CD8-positive, alpha-beta T cell (primary cell): ENCODE measurements at regions of chr15 and their contacts with region 1.

Region 1: DNA sequence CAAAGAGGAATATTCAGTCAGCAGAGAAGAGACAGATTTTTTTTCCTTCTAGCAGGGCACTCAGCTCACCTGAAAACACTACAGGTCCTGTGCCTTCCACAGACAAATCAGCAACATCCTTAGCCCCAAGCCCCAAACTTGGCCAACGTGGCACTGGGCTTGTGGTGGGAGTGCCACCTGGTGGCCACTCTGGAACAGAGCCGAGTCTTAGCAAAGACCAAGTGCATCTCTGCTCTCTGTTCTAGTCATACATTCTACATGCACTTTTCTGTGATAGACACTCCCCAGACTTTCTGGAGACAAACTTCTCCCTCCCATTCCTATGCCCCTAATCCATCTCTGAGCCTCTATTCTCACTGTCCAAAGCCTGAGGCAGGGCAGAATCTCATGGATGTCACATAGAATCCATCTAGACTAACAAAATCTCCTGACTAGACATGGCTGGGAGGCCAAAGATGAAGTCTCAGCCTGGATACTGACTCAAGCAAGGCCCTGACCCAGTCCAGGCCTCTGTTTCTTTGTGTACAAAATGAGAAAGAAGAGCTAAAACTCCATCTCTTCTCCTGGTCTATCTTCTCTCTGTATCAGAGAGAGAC is 5.1 kb upstream of the SEMA7A start:
- DNase-seq: peak; percentile 55 to 87 (median 76)
- ATAC-seq: peak; percentile 81
- H3K4me3 ChIP-seq: no peak overlapping the region
- H3K4me3 Mint-ChIP-seq: no peak overlapping the region
- H3K27ac ChIP-seq: no peak overlapping the region
- H3K27ac Mint-ChIP-seq: no peak overlapping the region
- H3K4me1 ChIP-seq: peaks cover 9% of the 10 kb centered on the region
- H3K4me1 Mint-ChIP-seq: peaks cover 19% of the 10 kb centered on the region
- H3K27me3 ChIP-seq: no peaks in the 10 kb centered on the region
- H3K27me3 Mint-ChIP-seq: no peaks in the 10 kb centered on the region
- CTCF ChIP-seq: peak; percentile 87

Region 2: DNA sequence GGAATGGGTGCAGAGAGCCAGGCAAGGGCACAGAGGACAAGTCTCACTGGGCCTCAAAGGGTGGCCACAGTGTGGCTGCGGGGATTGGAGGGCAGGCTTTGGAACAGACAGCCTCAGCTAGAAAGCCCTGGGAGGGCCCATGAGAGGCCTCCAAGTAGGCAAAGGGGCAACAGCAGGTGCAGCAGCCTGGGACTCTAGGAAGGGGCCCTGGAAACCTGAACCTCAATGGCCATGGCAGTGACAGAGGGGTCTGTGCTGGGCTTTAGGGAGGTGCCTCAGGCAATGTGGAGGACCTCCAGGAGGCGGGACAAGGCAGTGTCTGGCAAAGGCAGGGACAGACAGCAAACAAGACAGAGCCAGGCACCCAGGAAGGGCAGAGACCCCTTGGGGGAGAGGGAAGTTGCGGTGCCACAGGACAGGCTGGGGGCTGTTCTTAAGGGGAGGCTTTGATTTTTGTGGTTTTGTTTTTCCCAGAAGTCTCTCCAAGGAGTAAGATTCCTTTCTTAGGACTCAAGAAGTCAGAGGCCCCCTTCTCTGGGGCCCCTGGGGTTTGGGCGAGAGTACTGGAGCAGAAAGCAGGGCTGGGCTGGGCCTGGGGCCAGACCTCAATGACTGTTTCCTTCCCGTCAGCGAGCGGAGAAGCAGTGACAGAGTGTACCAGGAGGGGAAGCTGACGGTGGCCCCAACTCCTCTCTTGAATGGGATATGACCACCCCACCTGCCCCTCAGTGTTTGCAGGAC is 456.4 kb before region 1 on chr15:
- CTCF ChIA-PET with region 1: no interaction called
- POLR2A ChIA-PET with region 1: no interaction called
- intact Hi-C with region 1: no loop called
- DNase-seq: peak in 4 of 9 experiments; percentile 36 to 59 (median 46)
- ATAC-seq: peak; percentile 78
- H3K4me3 ChIP-seq: no peak overlapping the region
- H3K4me3 Mint-ChIP-seq: peak overlapping the region; percentile 11
- H3K27ac ChIP-seq: no peak overlapping the region
- H3K27ac Mint-ChIP-seq: peak overlapping the region; percentile 63
- H3K4me1 ChIP-seq: peaks cover 42% of the 10 kb centered on the region
- H3K4me1 Mint-ChIP-seq: peaks cover 35% of the 10 kb centered on the region
- H3K27me3 ChIP-seq: no peaks in the 10 kb centered on the region
- H3K27me3 Mint-ChIP-seq: no peaks in the 10 kb centered on the region
- CTCF ChIP-seq: no peak

Region 3: GRCh38 chr15:74389241-74390048 is 49.4 kb before region 1 on chr15:
- CTCF ChIA-PET with region 1: interaction called, 717 read pairs
- POLR2A ChIA-PET with region 1: interaction called, 11 read pairs
- intact Hi-C with region 1: no loop called
- DNase-seq: no peak
- ATAC-seq: no peak
- H3K4me3 ChIP-seq: no peak overlapping the region
- H3K4me3 Mint-ChIP-seq: no peak overlapping the region
- H3K27ac ChIP-seq: no peak overlapping the region
- H3K27ac Mint-ChIP-seq: no peak overlapping the region
- H3K4me1 ChIP-seq: peaks cover 12% of the 10 kb centered on the region
- H3K4me1 Mint-ChIP-seq: peaks cover 26% of the 10 kb centered on the region
- H3K27me3 ChIP-seq: no peaks in the 10 kb centered on the region
- H3K27me3 Mint-ChIP-seq: no peaks in the 10 kb centered on the region
- CTCF ChIP-seq: no peak

Region 4: GRCh38 chr15:74411691-74412558 is 26.9 kb before region 1 on chr15:
- CTCF ChIA-PET with region 1: interaction called, 14 read pairs
- POLR2A ChIA-PET with region 1: no interaction called
- intact Hi-C with region 1: no loop called
- DNase-seq: no peak
- ATAC-seq: no peak
- H3K4me3 ChIP-seq: no peak overlapping the region
- H3K4me3 Mint-ChIP-seq: no peak overlapping the region
- H3K27ac ChIP-seq: no peak overlapping the region
- H3K27ac Mint-ChIP-seq: no peak overlapping the region
- H3K4me1 ChIP-seq: peaks cover 14% of the 10 kb centered on the region
- H3K4me1 Mint-ChIP-seq: peaks cover 6% of the 10 kb centered on the region
- H3K27me3 ChIP-seq: no peaks in the 10 kb centered on the region
- H3K27me3 Mint-ChIP-seq: no peaks in the 10 kb centered on the region
- CTCF ChIP-seq: no peak

Region 5: DNA sequence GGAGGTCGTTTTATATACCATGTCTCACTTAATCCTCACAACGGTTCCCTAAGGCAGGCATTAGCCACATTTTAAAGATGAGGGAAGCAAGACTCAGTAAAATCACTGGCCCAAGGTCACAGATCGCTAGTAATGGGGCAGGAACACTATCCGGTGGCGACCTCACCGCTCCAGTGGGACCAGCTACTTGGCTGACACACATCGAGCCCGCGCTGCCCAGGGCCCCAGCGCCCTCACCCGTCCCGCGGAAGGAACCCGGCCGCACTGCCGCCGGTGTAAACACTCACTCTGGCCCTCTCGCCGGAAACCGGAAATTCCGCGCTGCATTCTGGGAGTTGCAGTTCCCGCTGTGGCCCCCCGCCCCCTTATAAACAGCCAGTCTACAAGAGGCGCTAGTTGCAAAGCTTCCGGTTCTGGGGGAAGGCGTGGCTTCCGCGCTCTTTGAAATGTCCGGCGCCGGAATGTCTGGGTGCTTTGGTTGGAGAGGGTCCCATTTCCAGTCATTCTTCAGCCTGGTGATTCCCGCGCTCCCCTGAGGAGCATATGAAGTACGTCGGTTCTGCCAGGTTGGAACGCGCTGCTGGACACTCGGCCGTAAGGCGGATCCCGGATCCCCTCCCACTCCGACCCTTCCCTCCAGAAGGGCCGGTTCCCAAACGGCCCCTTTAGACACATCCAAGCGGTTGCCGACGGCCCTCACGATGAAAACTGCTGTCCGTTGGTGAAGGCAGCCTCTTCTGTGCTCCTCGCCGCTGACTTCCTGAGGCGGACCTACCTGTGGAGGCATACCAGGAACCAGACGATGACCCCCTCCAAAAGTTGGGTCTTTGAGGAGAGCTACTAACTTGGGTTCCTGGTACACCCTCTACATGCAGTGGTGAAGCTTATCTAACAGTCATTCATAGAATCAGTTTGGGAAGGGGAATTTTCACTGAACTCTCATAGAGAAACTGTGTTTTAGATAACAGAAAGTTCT is 22.3 kb after region 1 on chr15 and contains the start of gene UBL7:
- CTCF ChIA-PET with region 1: interaction called, 10 read pairs
- POLR2A ChIA-PET with region 1: interaction called, 7 read pairs
- intact Hi-C with region 1: no loop called
- DNase-seq: peak; percentile 93 to 99 (median 96)
- ATAC-seq: peak; percentile 98
- H3K4me3 ChIP-seq: peak within 1 kb of the TSS; percentile 74 to 85
- H3K4me3 Mint-ChIP-seq: peak within 1 kb of the TSS; percentile 93
- H3K27ac ChIP-seq: peak within 1 kb of the TSS; percentile 53 to 83
- H3K27ac Mint-ChIP-seq: peak within 1 kb of the TSS; percentile 94
- H3K4me1 ChIP-seq: peaks cover 21% of the 10 kb centered on the region
- H3K4me1 Mint-ChIP-seq: peaks cover 50% of the 10 kb centered on the region
- H3K27me3 ChIP-seq: no peaks in the 10 kb centered on the region
- H3K27me3 Mint-ChIP-seq: no peaks in the 10 kb centered on the region
- CTCF ChIP-seq: no peak
- total RNA-seq, gene UBL7: 21.7 to 23.1 TPM